HAP-1 (cell line): ENCODE measurements at regions of chr11 and their contacts with region 1.

Region 1: DNA sequence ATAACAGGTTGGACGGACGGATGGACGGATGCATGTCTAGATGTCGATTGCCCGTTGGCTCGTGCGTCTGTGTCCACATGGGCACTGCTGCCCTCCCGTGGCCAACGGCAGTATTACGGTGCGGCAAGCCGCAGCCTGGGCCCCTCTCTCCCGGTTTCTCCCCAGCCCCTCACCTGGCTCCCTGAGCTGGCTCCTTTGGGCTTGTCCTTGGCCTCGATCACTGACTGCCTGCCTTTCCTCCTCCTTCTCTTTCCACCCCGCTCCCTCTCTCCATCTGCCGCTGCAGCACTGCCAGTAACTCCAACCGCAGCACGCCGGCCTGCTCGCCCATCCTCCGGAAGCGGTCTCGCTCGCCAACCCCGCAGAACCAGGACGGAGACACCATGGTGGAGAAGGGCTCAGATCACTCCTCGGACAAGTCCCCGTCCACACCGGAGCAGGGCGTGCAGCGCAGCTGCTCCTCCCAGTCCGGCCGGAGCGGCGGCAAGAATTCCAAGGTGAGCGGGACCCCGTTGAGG is 77.3 kb downstream of the SCN3B start:
- DNase-seq: peak; percentile 37 to 86
- H3K4me3 ChIP-seq: no peak overlapping the region
- H3K4me1 ChIP-seq: no peaks in the 10 kb centered on the region
- H3K27me3 ChIP-seq: no peaks in the 10 kb centered on the region

Region 2: GRCh38 chr11:123511037-123511870 is 65.9 kb before region 1 on chr11:
- in situ Hi-C with region 1: loop called (anchors 10 kb)
- DNase-seq: peak; percentile 95
- H3K4me3 ChIP-seq: no peak overlapping the region
- H3K4me1 ChIP-seq: 0 out of 2 replicates have a peak, but pooled peaks cover 3% of the 10 kb centered on the region
- H3K27me3 ChIP-seq: no peaks in the 10 kb centered on the region